ENCODE measurements at regions of chr15 and their contacts with region 1.

Region 1: GRCh38 chr15:69786136-69786701 is 311.5 kb downstream of the TLE3 start:
- DNase-seq: no peak
- ATAC-seq: no peak
- H3K4me3 ChIP-seq: no peak overlapping the region
- H3K4me3 Mint-ChIP-seq: no peak overlapping the region
- H3K27ac ChIP-seq: no peak overlapping the region
- H3K27ac Mint-ChIP-seq: no peak overlapping the region
- H3K4me1 ChIP-seq: peaks cover 18% of the 10 kb centered on the region
- H3K4me1 Mint-ChIP-seq: peaks cover 21% of the 10 kb centered on the region
- H3K27me3 ChIP-seq: peaks cover 0 to 6% of the 10 kb centered on the region in 2 experiments
- H3K27me3 Mint-ChIP-seq: peaks cover 32% of the 10 kb centered on the region
- CTCF ChIP-seq: no peak

Region 2: DNA sequence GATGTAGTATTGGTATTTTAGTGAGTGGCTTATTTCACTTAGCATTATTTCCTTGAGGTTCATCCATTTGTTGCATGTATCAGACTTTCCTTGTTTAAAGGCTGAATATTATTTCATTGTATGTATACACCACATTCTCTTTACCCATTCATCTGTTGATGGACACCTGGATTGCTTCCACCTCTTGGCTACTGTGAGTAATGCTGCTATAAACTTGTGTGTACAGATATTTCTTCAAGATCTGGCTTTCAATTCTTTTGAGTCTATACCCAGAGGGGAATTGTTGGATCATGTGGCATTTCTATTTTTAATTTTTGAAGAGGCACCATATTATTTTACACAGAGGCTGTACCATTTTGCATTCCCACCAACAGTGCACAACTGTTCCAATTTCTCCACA is 20.1 kb before region 1 on chr15:
- CTCF ChIA-PET with region 1: no interaction called
- POLR2A ChIA-PET with region 1: interaction called, 3 read pairs
- intact Hi-C with region 1: loop called in 1 of 2 experiments (anchors 2 kb)
- DNase-seq: no peak
- ATAC-seq: no peak
- H3K4me3 ChIP-seq: no peak overlapping the region
- H3K4me3 Mint-ChIP-seq: no peak overlapping the region
- H3K27ac ChIP-seq: no peak overlapping the region
- H3K27ac Mint-ChIP-seq: no peak overlapping the region
- H3K4me1 ChIP-seq: peaks cover 19% of the 10 kb centered on the region
- H3K4me1 Mint-ChIP-seq: peaks cover 41% of the 10 kb centered on the region
- H3K27me3 ChIP-seq: peaks cover 0 to 3% of the 10 kb centered on the region in 2 experiments
- H3K27me3 Mint-ChIP-seq: peaks cover 12% of the 10 kb centered on the region
- CTCF ChIP-seq: no peak

Region 3: GRCh38 chr15:70152070-70152480 is 365.9 kb after region 1 on chr15:
- CTCF ChIA-PET with region 1: no interaction called
- POLR2A ChIA-PET with region 1: no interaction called
- intact Hi-C with region 1: no loop called
- DNase-seq: peak in 2 of 14 experiments; percentile 26 to 47
- ATAC-seq: no peak
- H3K4me3 ChIP-seq: no peak overlapping the region
- H3K4me3 Mint-ChIP-seq: no peak overlapping the region
- H3K27ac ChIP-seq: no peak overlapping the region
- H3K27ac Mint-ChIP-seq: no peak overlapping the region
- H3K4me1 ChIP-seq: no peaks in the 10 kb centered on the region
- H3K4me1 Mint-ChIP-seq: no peaks in the 10 kb centered on the region
- H3K27me3 ChIP-seq: no peaks in the 10 kb centered on the region
- H3K27me3 Mint-ChIP-seq: no peaks in the 10 kb centered on the region
- CTCF ChIP-seq: no peak